Activated CD4-positive, alpha-beta memory T cell treated with anti-CD3 and anti-CD28 coated beads for 36 hours (primary cell): ENCODE measurements at regions of chr12 and their contacts with region 1.

Region 1: GRCh38 chr12:51270067-51270970 is at the start of gene SMAGP:
- DNase-seq: peak; percentile 56
- H3K4me3 Mint-ChIP-seq: peak within 1 kb of the TSS; percentile 78
- H3K27ac Mint-ChIP-seq: no peak within 1 kb of the TSS
- H3K4me1 Mint-ChIP-seq: peaks cover 21% of the 10 kb centered on the region
- H3K27me3 Mint-ChIP-seq: peaks cover 10% of the 10 kb centered on the region
- total RNA-seq, gene SMAGP: 0.55 to 0.73 TPM

Region 2: GRCh38 chr12:51326762-51327439 is 56.6 kb after region 1 on chr12:
- CTCF ChIA-PET with region 1: interaction called, 4 read pairs
- POLR2A ChIA-PET with region 1: no interaction called
- intact Hi-C with region 1: loop called (anchors 2 kb)
- DNase-seq: no peak
- H3K4me3 Mint-ChIP-seq: peak overlapping the region; percentile 52
- H3K27ac Mint-ChIP-seq: peak overlapping the region; percentile 90
- H3K4me1 Mint-ChIP-seq: peaks cover 64% of the 10 kb centered on the region
- H3K27me3 Mint-ChIP-seq: no peaks in the 10 kb centered on the region

Region 3: GRCh38 chr12:51471111-51471864 is 201.0 kb after region 1 on chr12:
- CTCF ChIA-PET with region 1: no interaction called
- POLR2A ChIA-PET with region 1: no interaction called
- intact Hi-C with region 1: no loop called
- DNase-seq: no peak
- H3K4me3 Mint-ChIP-seq: no peak overlapping the region
- H3K27ac Mint-ChIP-seq: no peak overlapping the region
- H3K4me1 Mint-ChIP-seq: peaks cover 6% of the 10 kb centered on the region
- H3K27me3 Mint-ChIP-seq: no peaks in the 10 kb centered on the region

Region 4: GRCh38 chr12:51531978-51532497 is 261.7 kb after region 1 on chr12:
- CTCF ChIA-PET with region 1: no interaction called
- POLR2A ChIA-PET with region 1: no interaction called
- intact Hi-C with region 1: loop called (anchors 10 kb)
- DNase-seq: peak; percentile 82
- H3K4me3 Mint-ChIP-seq: no peak overlapping the region
- H3K27ac Mint-ChIP-seq: no peak overlapping the region
- H3K4me1 Mint-ChIP-seq: peaks cover 7% of the 10 kb centered on the region
- H3K27me3 Mint-ChIP-seq: peaks cover 1% of the 10 kb centered on the region